CD8-positive, alpha-beta T cell (primary cell): ENCODE measurements at regions of chr15 and their contacts with region 1.

Region 1: DNA sequence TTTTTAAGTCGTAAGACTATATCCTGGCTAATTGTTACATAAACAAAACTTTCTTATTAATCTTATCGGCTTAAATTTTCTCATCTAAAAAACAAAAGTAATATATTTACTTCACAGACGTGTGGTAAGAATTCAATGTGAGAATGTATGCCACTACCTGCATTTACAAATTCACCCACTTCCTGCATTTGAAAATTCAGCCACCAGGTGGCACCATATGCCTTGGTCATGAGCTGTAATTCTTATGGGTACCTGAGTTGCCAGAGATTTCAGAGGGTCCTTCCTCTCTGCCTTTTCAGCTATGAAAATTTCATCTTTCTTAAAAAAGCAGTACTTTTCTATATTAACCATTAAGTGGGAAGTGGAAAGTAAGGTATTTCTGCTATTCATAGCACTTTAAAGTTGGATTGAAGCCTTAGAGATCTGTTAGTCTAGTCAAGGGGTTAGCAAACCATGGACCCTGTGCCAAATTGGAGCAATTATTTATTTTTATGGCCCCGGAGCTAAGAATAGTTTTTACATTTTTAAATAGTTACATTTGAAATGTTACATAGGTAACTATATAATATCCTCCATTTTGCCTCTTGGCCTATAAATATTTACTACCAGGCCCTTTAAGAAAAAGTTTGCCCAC is 127.8 kb downstream of the HCN4 start:
- DNase-seq: peak; percentile 48 to 78 (median 70)
- ATAC-seq: peak; percentile 34
- H3K4me3 ChIP-seq: no peak overlapping the region
- H3K4me3 Mint-ChIP-seq: no peak overlapping the region
- H3K27ac ChIP-seq: no peak overlapping the region
- H3K27ac Mint-ChIP-seq: no peak overlapping the region
- H3K4me1 ChIP-seq: no peaks in the 10 kb centered on the region
- H3K4me1 Mint-ChIP-seq: no peaks in the 10 kb centered on the region
- H3K27me3 ChIP-seq: no peaks in the 10 kb centered on the region
- H3K27me3 Mint-ChIP-seq: peaks cover 12% of the 10 kb centered on the region
- CTCF ChIP-seq: peak; percentile 94

Region 2: DNA sequence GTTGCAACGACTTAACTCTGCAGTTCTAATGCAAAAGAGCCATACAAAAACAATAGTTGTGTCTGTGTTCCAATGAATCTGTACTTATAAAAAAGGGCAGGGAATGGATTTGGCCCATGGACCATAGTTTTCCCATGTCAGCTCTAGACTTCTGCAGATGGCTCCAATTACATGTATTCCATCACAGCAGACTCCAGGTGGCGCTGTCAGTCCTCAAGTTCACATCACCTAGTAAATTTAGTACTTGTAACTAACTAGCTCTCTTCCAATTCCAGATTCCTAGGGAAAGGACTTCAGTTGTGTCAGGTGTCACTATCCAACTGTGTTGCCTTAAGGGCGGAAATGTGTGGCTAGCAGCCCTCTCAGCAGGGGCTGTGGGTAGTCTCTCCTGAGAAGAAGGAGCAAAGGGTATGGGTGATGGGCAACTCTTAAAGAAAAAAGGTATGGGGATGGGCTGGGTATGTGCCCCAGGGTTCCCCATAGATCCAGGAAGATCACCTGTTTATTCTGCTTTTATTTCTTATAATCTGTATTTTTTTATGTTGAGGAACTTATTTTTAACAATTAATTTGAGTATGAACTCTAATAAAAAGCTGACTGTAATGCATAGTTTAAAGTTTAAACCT is 518.8 kb before region 1 on chr15:
- CTCF ChIA-PET with region 1: interaction called, 4 read pairs
- POLR2A ChIA-PET with region 1: no interaction called
- intact Hi-C with region 1: loop called in 1 of 2 experiments (anchors 2 kb)
- DNase-seq: peak; percentile 37 to 76 (median 71)
- ATAC-seq: no peak
- H3K4me3 ChIP-seq: no peak overlapping the region
- H3K4me3 Mint-ChIP-seq: no peak overlapping the region
- H3K27ac ChIP-seq: no peak overlapping the region
- H3K27ac Mint-ChIP-seq: no peak overlapping the region
- H3K4me1 ChIP-seq: no peaks in the 10 kb centered on the region
- H3K4me1 Mint-ChIP-seq: no peaks in the 10 kb centered on the region
- H3K27me3 ChIP-seq: no peaks in the 10 kb centered on the region
- H3K27me3 Mint-ChIP-seq: no peaks in the 10 kb centered on the region
- CTCF ChIP-seq: peak; percentile 70

Region 3: GRCh38 chr15:72902245-72902918 is 338.6 kb before region 1 on chr15:
- CTCF ChIA-PET with region 1: no interaction called
- POLR2A ChIA-PET with region 1: no interaction called
- intact Hi-C with region 1: no loop called
- DNase-seq: no peak
- ATAC-seq: no peak
- H3K4me3 ChIP-seq: no peak overlapping the region
- H3K4me3 Mint-ChIP-seq: no peak overlapping the region
- H3K27ac ChIP-seq: no peak overlapping the region
- H3K27ac Mint-ChIP-seq: no peak overlapping the region
- H3K4me1 ChIP-seq: no peaks in the 10 kb centered on the region
- H3K4me1 Mint-ChIP-seq: no peaks in the 10 kb centered on the region
- H3K27me3 ChIP-seq: peaks cover 0 to 9% of the 10 kb centered on the region in 2 experiments
- H3K27me3 Mint-ChIP-seq: peaks cover 49% of the 10 kb centered on the region
- CTCF ChIP-seq: no peak

Region 4: DNA sequence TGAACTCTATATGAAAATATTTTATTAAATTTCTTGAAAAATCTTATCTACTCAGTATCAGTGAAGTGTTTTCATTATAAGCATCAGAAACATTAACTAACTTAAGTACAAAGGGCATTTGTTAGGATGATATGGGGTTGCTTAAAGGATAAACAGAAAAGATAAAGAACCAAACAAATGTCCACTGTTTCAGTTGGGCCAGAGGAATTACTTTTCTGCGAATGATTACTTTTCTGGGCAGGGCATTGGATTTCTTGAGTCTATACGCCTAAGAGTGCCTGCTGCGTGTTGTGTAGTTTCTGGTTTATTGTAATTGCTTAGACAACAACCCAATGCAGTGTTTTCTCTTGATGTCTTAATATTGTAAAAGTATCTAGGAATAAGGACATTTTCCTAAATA is 135.9 kb before region 1 on chr15:
- CTCF ChIA-PET with region 1: no interaction called
- POLR2A ChIA-PET with region 1: no interaction called
- intact Hi-C with region 1: no loop called
- DNase-seq: no peak
- ATAC-seq: no peak
- H3K4me3 ChIP-seq: no peak overlapping the region
- H3K4me3 Mint-ChIP-seq: no peak overlapping the region
- H3K27ac ChIP-seq: no peak overlapping the region
- H3K27ac Mint-ChIP-seq: no peak overlapping the region
- H3K4me1 ChIP-seq: no peaks in the 10 kb centered on the region
- H3K4me1 Mint-ChIP-seq: no peaks in the 10 kb centered on the region
- H3K27me3 ChIP-seq: no peaks in the 10 kb centered on the region
- H3K27me3 Mint-ChIP-seq: no peaks in the 10 kb centered on the region
- CTCF ChIP-seq: no peak

Region 5: GRCh38 chr15:73254598-73254997 is 13.6 kb after region 1 on chr15:
- CTCF ChIA-PET with region 1: interaction called, 18 read pairs
- POLR2A ChIA-PET with region 1: no interaction called
- intact Hi-C with region 1: no loop called
- DNase-seq: no peak
- ATAC-seq: no peak
- H3K4me3 ChIP-seq: no peak overlapping the region
- H3K4me3 Mint-ChIP-seq: no peak overlapping the region
- H3K27ac ChIP-seq: no peak overlapping the region
- H3K27ac Mint-ChIP-seq: no peak overlapping the region
- H3K4me1 ChIP-seq: no peaks in the 10 kb centered on the region
- H3K4me1 Mint-ChIP-seq: no peaks in the 10 kb centered on the region
- H3K27me3 ChIP-seq: no peaks in the 10 kb centered on the region
- H3K27me3 Mint-ChIP-seq: no peaks in the 10 kb centered on the region
- CTCF ChIP-seq: no peak

Region 6: GRCh38 chr15:73265536-73266153 is 24.7 kb after region 1 on chr15:
- CTCF ChIA-PET with region 1: interaction called, 37 read pairs
- POLR2A ChIA-PET with region 1: no interaction called
- intact Hi-C with region 1: no loop called
- DNase-seq: peak; percentile 3 to 59 (median 42)
- ATAC-seq: peak; percentile 55
- H3K4me3 ChIP-seq: no peak overlapping the region
- H3K4me3 Mint-ChIP-seq: no peak overlapping the region
- H3K27ac ChIP-seq: no peak overlapping the region
- H3K27ac Mint-ChIP-seq: no peak overlapping the region
- H3K4me1 ChIP-seq: no peaks in the 10 kb centered on the region
- H3K4me1 Mint-ChIP-seq: no peaks in the 10 kb centered on the region
- H3K27me3 ChIP-seq: no peaks in the 10 kb centered on the region
- H3K27me3 Mint-ChIP-seq: no peaks in the 10 kb centered on the region
- CTCF ChIP-seq: peak; percentile 56

Region 7: GRCh38 chr15:73273181-73274002 is 32.4 kb after region 1 on chr15:
- CTCF ChIA-PET with region 1: interaction called, 11 read pairs
- POLR2A ChIA-PET with region 1: no interaction called
- intact Hi-C with region 1: loop called (anchors 1 kb)
- DNase-seq: peak; percentile 2 to 61 (median 35)
- ATAC-seq: peak; percentile 36
- H3K4me3 ChIP-seq: no peak overlapping the region
- H3K4me3 Mint-ChIP-seq: no peak overlapping the region
- H3K27ac ChIP-seq: no peak overlapping the region
- H3K27ac Mint-ChIP-seq: no peak overlapping the region
- H3K4me1 ChIP-seq: no peaks in the 10 kb centered on the region
- H3K4me1 Mint-ChIP-seq: peaks cover 4% of the 10 kb centered on the region
- H3K27me3 ChIP-seq: no peaks in the 10 kb centered on the region
- H3K27me3 Mint-ChIP-seq: peaks cover 2% of the 10 kb centered on the region
- CTCF ChIP-seq: peak; percentile 65

Region 8: DNA sequence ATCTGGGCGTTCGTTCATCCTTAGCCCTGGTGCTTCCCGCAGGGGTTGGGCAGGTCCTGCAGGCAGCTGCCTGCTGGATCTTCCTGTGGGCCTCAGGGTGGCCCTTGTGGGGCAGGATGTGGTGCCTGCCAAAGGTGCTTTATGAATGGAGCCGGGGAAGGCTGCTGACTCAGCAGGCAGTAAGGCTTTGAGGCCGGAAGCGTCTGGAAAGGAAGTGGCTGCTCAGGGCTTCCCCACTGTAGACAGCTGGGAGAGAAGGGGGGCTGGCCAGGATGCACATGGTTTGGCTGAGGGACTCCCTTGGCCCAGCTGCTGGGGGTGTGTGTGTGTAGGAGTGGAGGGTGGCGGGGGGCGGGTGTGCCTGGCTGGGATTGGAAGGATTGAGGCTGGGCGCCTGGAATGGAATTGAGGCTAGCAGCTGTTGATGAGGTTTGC is 456.1 kb after region 1 on chr15:
- CTCF ChIA-PET with region 1: interaction called, 22 read pairs
- POLR2A ChIA-PET with region 1: no interaction called
- intact Hi-C with region 1: loop called in 1 of 2 experiments (anchors 1 kb)
- DNase-seq: peak; percentile 49 to 88 (median 75)
- ATAC-seq: peak; percentile 93
- H3K4me3 ChIP-seq: no peak overlapping the region
- H3K4me3 Mint-ChIP-seq: no peak overlapping the region
- H3K27ac ChIP-seq: no peak overlapping the region
- H3K27ac Mint-ChIP-seq: peak overlapping the region; percentile 41
- H3K4me1 ChIP-seq: peaks cover 16% of the 10 kb centered on the region
- H3K4me1 Mint-ChIP-seq: peaks cover 19% of the 10 kb centered on the region
- H3K27me3 ChIP-seq: peaks cover 5 to 13% of the 10 kb centered on the region in 2 experiments
- H3K27me3 Mint-ChIP-seq: peaks cover 62% of the 10 kb centered on the region
- CTCF ChIP-seq: no peak

Region 9: DNA sequence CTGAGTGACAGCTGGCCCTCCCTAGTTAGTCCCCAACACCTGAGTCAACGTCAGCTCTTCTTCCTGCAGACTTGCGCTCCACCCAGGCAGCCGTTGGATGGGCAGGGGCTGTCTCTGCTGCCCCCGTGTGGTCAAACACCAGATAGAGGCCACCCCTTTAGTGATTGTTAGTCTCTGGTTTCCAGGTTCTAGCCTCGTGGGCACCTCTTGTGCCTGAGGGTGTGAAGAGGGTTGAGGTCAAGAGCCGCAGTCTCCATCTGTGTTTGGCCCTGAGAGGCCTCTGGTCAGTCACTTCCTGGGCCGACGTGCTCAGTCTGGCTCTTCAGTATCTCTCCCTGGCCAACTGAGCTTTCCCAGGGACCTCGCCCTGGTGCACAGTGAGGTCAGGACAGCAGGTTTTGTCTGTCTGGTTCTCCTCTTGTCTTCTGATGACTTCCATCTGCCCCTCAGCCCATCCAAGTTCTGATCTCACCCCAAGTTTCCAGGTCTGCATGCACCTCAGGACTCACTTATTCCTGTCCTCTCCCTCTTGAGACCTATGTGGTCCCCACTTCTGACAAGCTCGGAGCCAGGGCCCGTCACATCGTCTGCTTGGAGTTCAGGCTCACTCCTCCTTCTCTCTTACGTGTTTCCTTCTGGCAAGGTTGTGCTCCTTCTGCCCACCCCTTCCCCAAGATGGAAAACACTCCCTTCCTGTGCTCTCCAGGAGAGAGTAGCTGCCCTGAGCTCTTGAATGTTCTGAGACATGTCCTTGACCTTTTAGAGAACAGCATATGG is 464.1 kb after region 1 on chr15:
- CTCF ChIA-PET with region 1: interaction called, 22 read pairs
- POLR2A ChIA-PET with region 1: no interaction called
- intact Hi-C with region 1: loop called in 1 of 2 experiments (anchors 1 kb)
- DNase-seq: peak; percentile 37 to 74 (median 58)
- ATAC-seq: peak; percentile 83
- H3K4me3 ChIP-seq: no peak overlapping the region
- H3K4me3 Mint-ChIP-seq: no peak overlapping the region
- H3K27ac ChIP-seq: no peak overlapping the region
- H3K27ac Mint-ChIP-seq: no peak overlapping the region
- H3K4me1 ChIP-seq: no peaks in the 10 kb centered on the region
- H3K4me1 Mint-ChIP-seq: peaks cover 4% of the 10 kb centered on the region
- H3K27me3 ChIP-seq: no peaks in the 10 kb centered on the region
- H3K27me3 Mint-ChIP-seq: peaks cover 28% of the 10 kb centered on the region
- CTCF ChIP-seq: peak; percentile 66

Region 10: DNA sequence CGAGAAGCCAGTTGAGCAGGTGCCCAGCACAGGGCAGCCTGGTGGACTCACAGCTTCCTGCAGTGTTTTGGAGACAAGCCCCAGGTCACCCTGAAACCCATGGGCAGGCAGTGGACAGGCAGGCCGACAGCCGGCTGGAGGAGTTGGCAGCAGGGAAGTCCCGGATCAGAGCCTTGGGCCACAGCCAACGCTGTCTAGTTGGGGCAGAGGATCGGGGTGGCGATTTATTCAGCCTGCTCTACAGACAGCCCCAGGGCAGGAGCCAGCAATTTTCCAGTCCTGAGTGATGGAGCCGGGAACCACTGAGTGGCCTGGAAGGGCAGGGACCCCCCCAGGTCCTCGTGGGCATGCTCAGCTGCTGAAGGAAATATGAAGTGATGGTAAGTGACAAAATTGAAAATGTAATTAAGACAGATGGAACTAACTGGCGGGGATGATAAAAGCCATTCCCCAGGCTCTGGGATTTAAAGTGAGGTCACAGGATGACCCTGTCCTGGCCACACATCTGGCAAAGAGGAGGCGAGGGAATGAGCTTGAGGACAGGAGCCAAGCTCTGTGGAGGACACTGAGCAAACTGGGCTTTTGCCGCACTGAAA is 597.9 kb after region 1 on chr15:
- CTCF ChIA-PET with region 1: no interaction called
- POLR2A ChIA-PET with region 1: no interaction called
- intact Hi-C with region 1: no loop called
- DNase-seq: no peak
- ATAC-seq: no peak
- H3K4me3 ChIP-seq: no peak overlapping the region
- H3K4me3 Mint-ChIP-seq: no peak overlapping the region
- H3K27ac ChIP-seq: no peak overlapping the region
- H3K27ac Mint-ChIP-seq: no peak overlapping the region
- H3K4me1 ChIP-seq: no peaks in the 10 kb centered on the region
- H3K4me1 Mint-ChIP-seq: no peaks in the 10 kb centered on the region
- H3K27me3 ChIP-seq: no peaks in the 10 kb centered on the region
- H3K27me3 Mint-ChIP-seq: peaks cover 28% of the 10 kb centered on the region
- CTCF ChIP-seq: no peak